ENCODE measurements at regions of chr9 and their contacts with region 1.

Region 1: DNA sequence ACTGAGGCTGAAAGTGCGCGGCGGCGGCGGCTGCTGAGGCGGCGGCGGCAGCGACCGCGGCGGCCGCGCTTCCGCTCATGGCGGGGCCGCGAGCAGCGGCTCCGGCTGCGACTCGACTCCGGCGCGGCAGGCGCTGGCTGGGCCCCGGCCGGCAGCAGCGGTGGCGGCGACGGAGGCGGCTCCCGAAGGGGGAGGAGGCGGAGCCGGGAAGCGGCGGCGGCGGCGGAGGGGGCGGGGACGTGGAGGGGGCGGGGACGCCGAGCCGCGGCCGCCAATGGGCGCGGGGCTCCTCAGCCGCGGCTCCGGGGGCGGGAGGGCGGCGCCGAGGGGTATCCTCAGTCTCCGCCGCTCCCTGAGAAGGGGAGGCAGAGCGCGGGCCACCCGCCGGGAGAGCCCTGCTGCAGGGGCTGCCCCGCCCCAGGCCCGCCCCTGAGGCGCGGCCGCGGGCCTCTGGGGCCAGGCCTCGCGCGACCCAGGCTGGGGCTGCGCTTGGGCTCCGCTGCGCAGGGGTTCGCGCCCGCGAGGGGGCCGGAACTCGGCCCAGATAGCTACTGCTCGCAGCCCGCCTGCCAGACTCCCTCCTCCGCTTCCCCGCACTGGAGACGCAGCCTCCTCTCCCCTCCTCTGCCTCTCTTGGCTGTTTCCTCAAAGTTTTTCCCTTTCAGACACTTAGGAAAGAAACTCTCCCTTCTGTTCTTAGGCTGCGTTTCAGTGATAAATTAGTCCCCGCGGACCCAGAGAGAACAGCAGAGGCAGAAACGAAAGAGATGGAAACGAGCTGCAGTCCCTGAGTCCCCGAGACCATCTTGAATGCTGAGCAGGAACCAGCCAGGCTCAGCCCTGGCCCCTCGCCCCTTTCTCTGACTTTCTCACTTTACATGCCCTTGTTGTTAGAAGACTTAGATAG is 85.0 kb upstream of the MELK start:
- DNase-seq: peak; percentile 97
- H3K4me3 Mint-ChIP-seq: peak overlapping the region; percentile 89
- H3K27ac Mint-ChIP-seq: peak overlapping the region; percentile 98
- H3K4me1 Mint-ChIP-seq: peaks cover 44% of the 10 kb centered on the region
- H3K27me3 Mint-ChIP-seq: no peaks in the 10 kb centered on the region

Region 2: GRCh38 chr9:36258208-36258988 is 229.3 kb before region 1 on chr9 and contains the start of gene GNE:
- intact Hi-C with region 1: loop called (anchors 5 kb)
- DNase-seq: peak; percentile 100
- H3K4me3 Mint-ChIP-seq: peak within 1 kb of the TSS; percentile 93
- H3K27ac Mint-ChIP-seq: peak within 1 kb of the TSS; percentile 94
- H3K4me1 Mint-ChIP-seq: peaks cover 10% of the 10 kb centered on the region
- H3K27me3 Mint-ChIP-seq: peaks cover 2% of the 10 kb centered on the region
- total RNA-seq, gene GNE: 22.2 and 23.3 TPM in 2 replicates

Region 3: DNA sequence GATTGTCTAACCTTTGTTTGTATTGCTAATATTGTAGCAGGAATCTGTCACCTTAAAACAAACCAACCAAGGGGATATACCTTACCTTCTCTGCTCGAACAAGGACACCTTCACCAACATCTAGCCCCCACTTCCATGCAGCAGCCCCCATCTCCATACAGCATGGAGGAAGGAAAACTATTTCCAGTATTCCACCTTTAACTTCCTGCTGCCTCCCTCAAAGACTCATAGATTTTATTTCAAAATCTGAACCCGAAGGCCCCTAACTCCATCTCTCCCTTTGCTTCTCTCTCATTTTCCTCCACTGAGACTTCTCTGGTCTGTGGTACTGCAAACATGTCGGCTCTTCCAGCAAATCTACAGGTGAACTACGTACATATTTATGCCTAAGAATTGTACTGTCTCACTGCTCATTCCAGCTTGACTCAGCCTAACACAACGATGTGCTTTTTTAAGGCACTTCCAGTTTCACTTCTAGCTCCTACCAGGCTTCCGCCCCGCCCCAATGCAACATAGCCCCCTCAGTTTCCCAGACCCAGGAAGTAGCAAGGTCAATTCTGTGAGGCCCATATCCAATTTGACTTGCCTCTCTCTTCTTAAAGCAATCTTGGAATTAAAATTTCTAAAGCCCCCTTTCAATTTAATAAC is 17.0 kb before region 1 on chr9:
- intact Hi-C with region 1: loop called (anchors 1 kb)
- DNase-seq: peak; percentile 90
- H3K4me3 Mint-ChIP-seq: peak overlapping the region; percentile 86
- H3K27ac Mint-ChIP-seq: peak overlapping the region; percentile 92
- H3K4me1 Mint-ChIP-seq: peaks cover 27% of the 10 kb centered on the region
- H3K27me3 Mint-ChIP-seq: no peaks in the 10 kb centered on the region

Region 4: GRCh38 chr9:36517131-36517530 is 29.4 kb after region 1 on chr9:
- intact Hi-C with region 1: no loop called
- DNase-seq: no peak
- H3K4me3 Mint-ChIP-seq: no peak overlapping the region
- H3K27ac Mint-ChIP-seq: no peak overlapping the region
- H3K4me1 Mint-ChIP-seq: no peaks in the 10 kb centered on the region
- H3K27me3 Mint-ChIP-seq: peaks cover 8% of the 10 kb centered on the region

Region 5: GRCh38 chr9:36551129-36551528 is 63.4 kb after region 1 on chr9:
- intact Hi-C with region 1: loop called (anchors 1 kb)
- DNase-seq: no peak
- H3K4me3 Mint-ChIP-seq: no peak overlapping the region
- H3K27ac Mint-ChIP-seq: no peak overlapping the region
- H3K4me1 Mint-ChIP-seq: peaks cover 4% of the 10 kb centered on the region
- H3K27me3 Mint-ChIP-seq: peaks cover 16% of the 10 kb centered on the region

Region 6: GRCh38 chr9:36572515-36573418 is 85.0 kb after region 1 on chr9 and contains the start of gene MELK:
- intact Hi-C with region 1: loop called (anchors 1 kb)
- DNase-seq: peak; percentile 97
- H3K4me3 Mint-ChIP-seq: peak within 1 kb of the TSS; percentile 97
- H3K27ac Mint-ChIP-seq: peak within 1 kb of the TSS; percentile 89
- H3K4me1 Mint-ChIP-seq: peaks cover 31% of the 10 kb centered on the region
- H3K27me3 Mint-ChIP-seq: peaks cover 7% of the 10 kb centered on the region
- total RNA-seq, gene MELK: 54.2 and 57.0 TPM in 2 replicates